ENCODE measurements at regions of chrX and their contacts with region 1.

Region 1: DNA sequence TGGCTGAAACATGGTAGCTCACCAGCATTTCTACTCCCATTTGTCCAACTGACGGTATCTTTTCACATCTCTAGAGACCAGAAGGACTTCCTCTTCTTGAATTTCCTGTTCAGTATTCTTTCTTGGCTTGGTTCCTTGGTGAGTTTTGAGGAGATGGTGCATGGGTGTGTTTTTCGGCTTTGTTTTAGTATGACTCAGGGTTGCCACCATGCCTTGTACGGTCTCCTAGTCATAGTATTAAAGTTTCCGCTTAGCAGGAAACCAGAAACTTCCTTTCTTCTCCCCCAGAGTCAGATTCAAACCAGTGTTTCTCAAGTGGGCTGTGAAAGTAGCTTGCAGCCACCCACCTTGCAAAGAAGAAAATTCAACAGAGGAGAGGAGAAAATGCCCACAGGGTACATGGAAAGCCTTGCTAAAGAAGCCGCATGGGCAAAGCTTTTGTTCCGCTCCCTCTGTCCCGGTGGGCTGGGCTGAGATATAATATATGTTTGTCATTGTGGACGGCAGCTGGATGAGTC is 5.7 kb downstream of the CD99 start:
- DNase-seq: peak; percentile 79
- ATAC-seq: peak; percentile 82
- H3K4me3 Mint-ChIP-seq: peak overlapping the region; percentile 54
- H3K27ac Mint-ChIP-seq: peak overlapping the region; percentile 85
- H3K4me1 Mint-ChIP-seq: peaks cover 81% of the 10 kb centered on the region
- H3K27me3 Mint-ChIP-seq: no peaks in the 10 kb centered on the region
- CTCF ChIP-seq: no peak

Region 2: DNA sequence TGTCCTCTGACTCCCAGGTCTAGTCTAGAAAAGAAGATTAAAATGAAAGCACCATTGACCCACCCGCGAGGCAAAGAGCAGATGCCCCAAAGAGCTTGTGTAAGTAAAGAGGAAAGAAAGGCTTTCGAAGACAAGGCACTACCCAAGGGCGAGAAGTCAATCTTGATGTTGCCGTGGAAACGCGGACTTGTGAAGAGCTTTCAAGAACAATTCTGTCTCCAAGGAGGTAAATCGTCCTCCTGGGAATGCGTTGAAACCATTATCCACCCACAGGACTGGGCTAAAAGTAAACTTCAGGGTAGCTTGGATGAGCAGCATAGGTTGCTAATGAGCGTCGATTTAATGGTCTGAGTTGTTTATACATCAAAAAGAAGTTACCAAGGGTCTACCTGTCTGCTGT is 385.3 kb before region 1 on chrX:
- CTCF ChIA-PET with region 1: no interaction called
- POLR2A ChIA-PET with region 1: no interaction called
- intact Hi-C with region 1: no loop called
- DNase-seq: no peak
- ATAC-seq: no peak
- H3K4me3 Mint-ChIP-seq: no peak overlapping the region
- H3K27ac Mint-ChIP-seq: no peak overlapping the region
- H3K4me1 Mint-ChIP-seq: no peaks in the 10 kb centered on the region
- H3K27me3 Mint-ChIP-seq: no peaks in the 10 kb centered on the region
- CTCF ChIP-seq: no peak

Region 3: DNA sequence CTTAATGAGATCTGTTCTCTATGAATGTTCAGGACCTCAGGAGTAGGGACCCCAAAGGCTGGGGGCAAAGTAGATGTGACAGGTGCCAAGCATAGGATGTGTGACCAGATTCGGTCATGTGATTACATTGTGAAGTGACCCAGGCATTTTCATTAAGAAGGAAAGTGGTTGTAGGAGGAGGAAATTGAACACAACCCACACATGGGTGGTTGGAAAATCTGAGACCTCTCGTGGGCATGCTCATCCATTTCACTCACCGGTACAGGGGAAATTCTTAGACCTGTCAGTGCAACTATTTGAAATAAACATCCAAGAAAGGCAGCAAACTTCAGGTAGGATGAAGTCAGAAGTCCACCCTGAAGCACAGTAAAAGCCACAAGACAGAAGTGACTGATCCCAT is 49.1 kb before region 1 on chrX:
- CTCF ChIA-PET with region 1: no interaction called
- POLR2A ChIA-PET with region 1: no interaction called
- intact Hi-C with region 1: loop called (anchors 5 kb)
- DNase-seq: peak; percentile 63
- ATAC-seq: peak; percentile 43
- H3K4me3 Mint-ChIP-seq: no peak overlapping the region
- H3K27ac Mint-ChIP-seq: peak overlapping the region; percentile 78
- H3K4me1 Mint-ChIP-seq: peaks cover 29% of the 10 kb centered on the region
- H3K27me3 Mint-ChIP-seq: no peaks in the 10 kb centered on the region
- CTCF ChIP-seq: no peak

Region 4: GRCh38 chrX:2664502-2664901 is 32.3 kb before region 1 on chrX:
- CTCF ChIA-PET with region 1: no interaction called
- POLR2A ChIA-PET with region 1: no interaction called
- intact Hi-C with region 1: no loop called
- DNase-seq: peak; percentile 15
- ATAC-seq: no peak
- H3K4me3 Mint-ChIP-seq: no peak overlapping the region
- H3K27ac Mint-ChIP-seq: no peak overlapping the region
- H3K4me1 Mint-ChIP-seq: peaks cover 3% of the 10 kb centered on the region
- H3K27me3 Mint-ChIP-seq: no peaks in the 10 kb centered on the region
- CTCF ChIP-seq: no peak

Region 5: GRCh38 chrX:2707334-2707760 is 10.6 kb after region 1 on chrX:
- CTCF ChIA-PET with region 1: no interaction called
- POLR2A ChIA-PET with region 1: no interaction called
- intact Hi-C with region 1: loop called (anchors 1 kb)
- DNase-seq: peak; percentile 87
- ATAC-seq: peak; percentile 65
- H3K4me3 Mint-ChIP-seq: peak overlapping the region; percentile 9
- H3K27ac Mint-ChIP-seq: peak overlapping the region; percentile 88
- H3K4me1 Mint-ChIP-seq: peaks cover 88% of the 10 kb centered on the region
- H3K27me3 Mint-ChIP-seq: no peaks in the 10 kb centered on the region
- CTCF ChIP-seq: no peak

Region 6: GRCh38 chrX:2756548-2756947 is 59.8 kb after region 1 on chrX:
- CTCF ChIA-PET with region 1: no interaction called
- POLR2A ChIA-PET with region 1: no interaction called
- intact Hi-C with region 1: no loop called
- DNase-seq: no peak
- ATAC-seq: no peak
- H3K4me3 Mint-ChIP-seq: no peak overlapping the region
- H3K27ac Mint-ChIP-seq: no peak overlapping the region
- H3K4me1 Mint-ChIP-seq: no peaks in the 10 kb centered on the region
- H3K27me3 Mint-ChIP-seq: no peaks in the 10 kb centered on the region
- CTCF ChIP-seq: no peak

Measured in activated CD8-positive, alpha-beta T cell treated with anti-CD3 and anti-CD28 coated beads for 36 hours (primary cell).